BJ (cell line): ENCODE measurements at regions of chr4 and their contacts with region 1.

Region 1: DNA sequence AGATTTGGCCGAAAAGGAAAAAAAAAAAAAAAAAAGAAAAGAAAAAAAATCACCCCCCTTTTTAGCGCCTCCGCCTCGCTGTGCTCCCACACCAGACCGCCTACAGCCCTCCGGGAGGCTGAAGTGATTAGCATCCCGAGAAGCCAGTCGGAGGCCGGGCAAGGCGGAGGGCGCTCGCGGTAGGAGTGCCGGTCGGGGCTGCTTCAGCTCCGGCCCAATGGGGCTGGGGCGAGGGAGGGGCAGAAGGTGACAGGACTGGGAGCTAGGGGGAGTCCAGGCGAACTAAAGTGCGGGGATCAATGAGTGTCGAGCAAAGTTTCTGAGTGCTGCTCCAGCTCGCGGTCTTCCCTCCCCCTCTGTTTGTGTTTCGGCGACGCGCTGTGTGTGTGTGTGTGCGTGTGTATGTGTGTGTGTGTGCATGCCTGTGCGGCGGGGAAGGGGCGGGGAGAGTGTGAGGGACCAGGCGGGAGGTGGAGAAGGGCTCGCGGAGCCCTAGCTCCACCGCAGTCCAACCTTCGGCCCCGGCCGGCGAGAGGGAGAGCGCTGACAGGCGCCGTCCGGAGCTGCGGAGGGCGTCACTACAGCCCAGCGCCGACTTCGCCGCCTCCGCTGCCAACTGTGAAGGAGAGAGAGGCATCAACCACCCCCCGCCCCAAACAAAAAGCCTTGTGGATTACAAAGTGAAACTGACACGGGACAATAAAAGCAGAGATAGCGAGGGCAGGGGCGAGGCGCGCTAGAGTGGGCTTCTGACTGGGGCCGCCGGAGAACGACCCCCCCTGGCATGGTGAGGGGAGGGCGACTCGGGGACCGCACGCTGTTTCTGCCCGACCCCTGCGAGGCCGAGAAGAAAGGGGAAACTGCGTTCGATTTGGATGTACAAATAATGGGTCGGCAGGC is at the start of gene FAT4:
- DNase-seq: peak; percentile 83
- H3K4me3 ChIP-seq: peak within 1 kb of the TSS; percentile 85
- H3K27me3 ChIP-seq: no peaks in the 10 kb centered on the region
- CTCF ChIP-seq: peak; percentile 37; the same call in 1 of the 2 replicates
- polyA plus RNA-seq, gene FAT4: 9.5 and 12.9 TPM in 2 replicates

Region 2: GRCh38 chr4:125334926-125335325 is 20.0 kb after region 1 on chr4:
- CTCF ChIA-PET with region 1: no interaction called
- POLR2A ChIA-PET with region 1: interaction called, 20 read pairs
- DNase-seq: no peak
- H3K4me3 ChIP-seq: no peak overlapping the region
- H3K27me3 ChIP-seq: no peaks in the 10 kb centered on the region
- CTCF ChIP-seq: no peak